ENCODE measurements at regions of chr3 and their contacts with region 1.

Region 1: GRCh38 chr3:149596136-149596770 is 61.6 kb downstream of the WWTR1 start:
- DNase-seq: no peak
- ATAC-seq: peak; percentile 54
- H3K4me3 ChIP-seq: peak overlapping the region; percentile 1 to 27; a peak in 3 of 4 replicates
- H3K27ac ChIP-seq: peak overlapping the region; percentile 100
- H3K4me1 ChIP-seq: peaks cover 100% of the 10 kb centered on the region
- H3K27me3 ChIP-seq: no peaks in the 10 kb centered on the region
- CTCF ChIP-seq: no peak

Region 2: GRCh38 chr3:149581681-149582370 is 14.4 kb before region 1 on chr3:
- CTCF ChIA-PET with region 1: interaction called, 15 read pairs
- POLR2A ChIA-PET with region 1: interaction called, 4 read pairs
- in situ Hi-C with region 1: no loop called
- intact Hi-C with region 1: no loop called
- DNase-seq: peak; percentile 88
- ATAC-seq: peak; percentile 66
- H3K4me3 ChIP-seq: peak overlapping the region in 1 of 2 experiments; percentile 5; a peak in 2 of 4 replicates
- H3K27ac ChIP-seq: peak overlapping the region; percentile 100
- H3K4me1 ChIP-seq: peaks cover 100% of the 10 kb centered on the region
- H3K27me3 ChIP-seq: no peaks in the 10 kb centered on the region
- CTCF ChIP-seq: no peak

Measured in Panc1 (cell line).